Astrocyte of the cerebellum (primary cell): ENCODE measurements at regions of chr12 and their contacts with region 1.

Region 1: DNA sequence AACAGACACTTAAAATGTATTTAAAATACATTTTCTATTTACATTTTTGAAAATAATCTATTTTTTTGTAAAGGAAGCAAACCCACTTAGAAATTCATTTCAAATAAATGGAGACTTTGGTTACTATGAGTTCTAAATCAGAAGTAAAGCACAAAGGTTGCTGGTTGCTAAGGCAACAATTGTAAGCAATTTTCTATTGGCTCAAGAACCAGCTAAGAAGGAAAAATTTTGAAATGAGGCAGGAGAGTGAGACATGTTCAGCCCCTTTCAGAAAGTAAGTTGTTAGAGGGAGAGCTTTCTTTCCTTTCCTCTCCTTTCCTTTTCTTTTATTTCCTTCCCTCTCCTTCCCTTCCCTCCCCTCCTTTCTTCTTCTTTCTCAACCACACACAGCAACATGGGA is 80.7 kb downstream of the PRMT8 start:
- DNase-seq: no peak
- H3K4me3 ChIP-seq: no peak overlapping the region
- CTCF ChIP-seq: no peak

Region 2: GRCh38 chr12:3533703-3534386 is 37.9 kb before region 1 on chr12:
- in situ Hi-C with region 1: loop called (anchors 5 kb)
- DNase-seq: no peak
- H3K4me3 ChIP-seq: no peak overlapping the region
- CTCF ChIP-seq: no peak

Region 3: GRCh38 chr12:3641428-3642018 is 69.8 kb after region 1 on chr12:
- in situ Hi-C with region 1: no loop called
- DNase-seq: no peak
- H3K4me3 ChIP-seq: no peak overlapping the region
- CTCF ChIP-seq: no peak